Activated CD4-positive, alpha-beta T cell treated with anti-CD3 and anti-CD28 coated beads, Interleukin-2, amount 10 ng/mL, durations not matched to agents 7 days and 5 days (primary cell): ENCODE measurements at regions of chr2 and their contacts with region 1.

Region 1: GRCh38 chr2:189674374-189675112 is at the start of gene ANKAR:
- DNase-seq: peak; percentile 67
- H3K4me3 Mint-ChIP-seq: peak within 1 kb of the TSS; percentile 86
- H3K27ac Mint-ChIP-seq: peak within 1 kb of the TSS; percentile 98
- H3K4me1 Mint-ChIP-seq: peaks cover 30% of the 10 kb centered on the region
- H3K27me3 Mint-ChIP-seq: no peaks in the 10 kb centered on the region
- total RNA-seq, gene ANKAR: 4.0 to 4.8 TPM

Region 2: DNA sequence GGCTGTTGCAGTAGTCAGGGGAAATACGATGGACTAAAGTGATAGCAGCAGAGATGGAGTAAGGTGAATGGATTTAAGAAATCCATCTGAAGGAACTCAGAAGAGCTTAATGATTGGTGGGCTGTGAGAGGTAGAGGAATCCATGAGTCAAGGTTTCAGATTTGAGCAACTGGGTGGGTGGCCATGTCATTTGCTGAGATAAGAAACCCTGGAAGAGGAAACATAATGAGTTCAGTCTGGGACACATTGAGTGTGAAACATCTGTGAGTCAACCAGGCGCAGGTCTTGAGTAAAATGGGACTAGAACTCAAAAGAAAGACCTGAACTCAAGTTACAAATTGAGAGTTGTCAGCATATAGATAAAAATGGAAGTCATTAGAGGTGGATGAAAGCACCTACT is 33.0 kb before region 1 on chr2:
- CTCF ChIA-PET with region 1: no interaction called
- POLR2A ChIA-PET with region 1: no interaction called
- DNase-seq: no peak
- H3K4me3 Mint-ChIP-seq: no peak overlapping the region
- H3K27ac Mint-ChIP-seq: no peak overlapping the region
- H3K4me1 Mint-ChIP-seq: peaks cover 6% of the 10 kb centered on the region
- H3K27me3 Mint-ChIP-seq: no peaks in the 10 kb centered on the region

Region 3: DNA sequence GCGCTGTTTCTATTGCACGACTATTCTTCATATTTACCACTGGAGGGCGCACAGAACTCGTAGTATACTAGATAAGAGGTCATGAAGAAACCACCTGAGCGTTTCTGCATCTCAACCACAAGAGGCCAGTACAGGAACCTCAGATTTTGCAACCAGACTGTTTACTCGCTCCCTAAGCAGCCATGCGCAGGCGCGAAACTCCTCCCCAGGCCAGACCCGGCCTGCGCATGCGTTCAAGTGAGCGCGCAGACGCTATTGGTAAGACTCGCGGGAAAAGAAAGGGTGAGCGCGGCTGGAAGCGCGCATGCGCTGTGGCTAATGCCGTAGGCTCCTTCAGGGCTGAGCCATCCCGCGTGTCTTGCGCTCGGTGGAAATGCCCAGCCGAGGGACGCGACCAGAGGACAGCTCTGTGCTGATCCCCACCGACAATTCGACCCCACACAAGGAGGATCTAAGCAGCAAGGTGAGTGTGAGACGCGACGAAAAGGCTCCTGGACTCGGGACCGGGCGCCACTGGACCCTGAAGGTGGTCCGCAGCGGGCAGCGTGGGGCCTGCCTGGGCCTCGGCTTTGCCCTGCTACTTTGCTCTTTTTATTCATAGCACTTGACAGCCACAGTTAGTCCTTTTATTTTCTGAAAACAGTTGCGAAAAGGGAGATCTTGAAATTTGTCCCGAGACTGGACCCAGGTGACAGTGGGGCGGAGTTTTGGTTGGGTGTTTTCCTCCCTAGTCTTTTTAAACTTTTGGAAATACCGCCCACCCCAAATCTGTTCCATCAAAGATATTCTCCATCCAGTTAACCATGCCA is 13.2 kb before region 1 on chr2 and contains the start of gene ASNSD1:
- CTCF ChIA-PET with region 1: interaction called, 31 read pairs
- POLR2A ChIA-PET with region 1: interaction called, 3 read pairs
- DNase-seq: peak; percentile 99
- H3K4me3 Mint-ChIP-seq: no peak within 1 kb of the TSS
- H3K27ac Mint-ChIP-seq: no peak within 1 kb of the TSS
- H3K4me1 Mint-ChIP-seq: peaks cover 54% of the 10 kb centered on the region
- H3K27me3 Mint-ChIP-seq: no peaks in the 10 kb centered on the region
- total RNA-seq, gene ASNSD1: 34.8 to 40.3 TPM

Region 4: DNA sequence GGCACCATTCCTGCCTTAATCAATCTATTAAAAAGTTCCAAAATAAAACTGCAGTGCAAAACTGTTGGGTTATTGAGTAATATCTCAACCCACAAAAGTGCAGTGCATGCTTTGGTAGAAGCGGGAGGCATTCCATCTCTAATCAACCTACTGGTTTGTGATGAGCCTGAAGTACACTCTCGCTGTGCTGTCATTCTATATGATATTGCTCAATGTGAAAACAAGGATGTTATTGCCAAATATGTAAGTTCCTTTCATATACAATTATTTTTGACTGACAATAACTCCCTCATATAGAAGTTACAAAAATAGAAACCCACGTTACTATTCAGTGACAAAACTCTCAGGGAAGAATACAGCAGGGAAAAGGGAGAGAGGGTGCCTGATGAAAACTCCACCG is 45.0 kb after region 1 on chr2:
- CTCF ChIA-PET with region 1: no interaction called
- POLR2A ChIA-PET with region 1: no interaction called
- DNase-seq: no peak
- H3K4me3 Mint-ChIP-seq: no peak overlapping the region
- H3K27ac Mint-ChIP-seq: no peak overlapping the region
- H3K4me1 Mint-ChIP-seq: no peaks in the 10 kb centered on the region
- H3K27me3 Mint-ChIP-seq: no peaks in the 10 kb centered on the region